GM12878 (cell line): ENCODE measurements at regions of chr9 and their contacts with region 1.

Region 1: DNA sequence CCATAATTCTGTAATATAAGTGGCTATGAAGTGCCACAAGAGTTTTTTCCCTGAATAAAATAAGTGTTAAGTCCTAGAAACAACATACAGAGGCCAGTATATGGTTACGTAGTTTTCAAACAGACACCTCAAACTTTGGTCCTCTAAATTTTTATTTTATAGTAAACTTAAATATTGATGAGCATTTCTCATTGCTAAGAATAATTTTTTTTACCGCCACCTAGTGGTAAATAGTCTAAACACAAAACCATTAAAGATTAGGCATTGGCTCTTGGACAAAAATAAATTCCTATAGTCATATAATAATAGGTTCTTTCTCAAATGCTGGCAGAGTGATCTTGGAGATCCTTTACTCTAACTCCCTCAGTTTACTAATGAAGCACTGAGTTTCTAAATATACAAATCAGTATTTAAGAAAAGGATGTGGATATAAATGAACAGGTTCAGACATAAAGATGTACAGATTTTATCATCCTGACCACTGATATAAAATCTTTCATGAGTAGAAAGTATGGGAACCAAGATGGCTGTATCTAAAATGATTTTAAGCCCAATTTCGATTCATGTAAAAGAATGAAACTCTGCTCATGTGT is 136.2 kb downstream of the FANCC start:
- DNase-seq: no peak
- ATAC-seq: 0 out of 3 replicates have a peak, but pooled peaks have one; percentile 21
- H3K4me3 ChIP-seq: no peak overlapping the region
- H3K27ac ChIP-seq: no peak overlapping the region
- H3K4me1 ChIP-seq: no peaks in the 10 kb centered on the region
- H3K27me3 ChIP-seq: no peaks in the 10 kb centered on the region
- CTCF ChIP-seq: peak; percentile 21 to 47 (median 34); a peak in 4 of 6 replicates
- EP300 ChIP-seq: no peak
- POLR2A ChIP-seq: no peak
- RAD21 ChIP-seq: peak; percentile 22; the same call in 1 of the 2 replicates

Region 2: DNA sequence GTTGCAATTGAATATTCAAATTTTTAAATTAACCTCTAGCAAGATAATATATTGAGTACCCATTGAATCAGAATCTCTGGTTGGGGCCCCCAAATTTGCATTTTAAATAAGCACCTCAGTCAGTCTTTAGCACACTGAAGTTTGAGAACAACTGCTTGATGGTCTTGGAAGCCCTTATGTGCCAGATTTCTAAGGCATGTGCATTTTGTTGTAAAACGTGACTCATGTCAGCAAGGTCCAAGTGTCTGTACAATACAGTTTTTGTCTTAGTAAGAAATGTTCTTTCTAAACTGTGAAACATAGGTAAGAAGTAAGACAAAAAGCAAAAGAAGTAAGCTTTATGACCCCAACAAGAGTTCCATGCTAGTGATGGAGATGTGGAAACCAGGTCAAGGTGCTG is 1664.0 kb before region 1 on chr9:
- CTCF ChIA-PET with region 1: no interaction called
- POLR2A ChIA-PET with region 1: no interaction called
- RAD21 ChIA-PET with region 1: no interaction called
- SMC1A ChIA-PET with region 1: no interaction called
- in situ Hi-C with region 1: no loop called
- intact Hi-C with region 1: no loop called
- DNase-seq: no peak
- ATAC-seq: no peak
- H3K4me3 ChIP-seq: no peak overlapping the region
- H3K27ac ChIP-seq: no peak overlapping the region
- H3K4me1 ChIP-seq: no peaks in the 10 kb centered on the region
- H3K27me3 ChIP-seq: no peaks in the 10 kb centered on the region
- CTCF ChIP-seq: no peak
- EP300 ChIP-seq: no peak
- POLR2A ChIP-seq: no peak
- RAD21 ChIP-seq: no peak

Region 3: GRCh38 chr9:94554439-94555391 is 626.6 kb before region 1 on chr9 and contains the start of gene PCAT7:
- CTCF ChIA-PET with region 1: no interaction called
- POLR2A ChIA-PET with region 1: no interaction called
- RAD21 ChIA-PET with region 1: no interaction called
- SMC1A ChIA-PET with region 1: no interaction called
- in situ Hi-C with region 1: no loop called
- intact Hi-C with region 1: no loop called
- DNase-seq: peak; percentile 12
- ATAC-seq: peak; percentile 100
- H3K4me3 ChIP-seq: no peak within 1 kb of the TSS
- H3K27ac ChIP-seq: no peak within 1 kb of the TSS
- H3K4me1 ChIP-seq: no peaks in the 10 kb centered on the region
- H3K27me3 ChIP-seq: no peaks in the 10 kb centered on the region; a peak in 1 of 4 replicates
- CTCF ChIP-seq: peak; percentile 28 to 54 (median 52); a peak in 4 of 6 replicates
- EP300 ChIP-seq: no peak
- POLR2A ChIP-seq: no peak
- RAD21 ChIP-seq: peak; percentile 44; the same call in 1 of the 2 replicates
- polyA plus RNA-seq, gene PCAT7: 0.04 TPM in 1 of 2 experiments, not detected in the other

Region 4: DNA sequence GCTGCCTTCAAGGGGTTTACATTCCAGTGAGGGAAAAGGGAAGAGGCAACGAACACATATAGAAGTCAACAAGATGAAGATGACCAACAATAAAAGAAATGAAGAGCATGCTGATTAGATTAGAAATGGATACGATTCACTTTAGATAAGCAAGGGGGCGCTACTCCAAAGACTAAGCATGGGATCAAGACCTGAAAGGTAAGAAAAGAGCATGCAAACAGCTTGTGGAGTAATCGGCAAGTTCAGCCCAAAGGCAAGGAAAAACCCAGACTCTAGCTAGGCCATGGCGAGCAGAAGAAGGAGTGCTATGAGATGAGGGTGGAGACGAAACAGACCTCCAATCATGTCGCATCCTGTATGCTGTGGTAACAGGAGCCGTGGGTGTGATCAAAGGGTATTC is 11.7 kb after region 1 on chr9:
- CTCF ChIA-PET with region 1: interaction called, 11 read pairs
- POLR2A ChIA-PET with region 1: no interaction called
- RAD21 ChIA-PET with region 1: no interaction called
- SMC1A ChIA-PET with region 1: no interaction called
- in situ Hi-C with region 1: no loop called
- intact Hi-C with region 1: no loop called
- DNase-seq: no peak
- ATAC-seq: no peak
- H3K4me3 ChIP-seq: no peak overlapping the region
- H3K27ac ChIP-seq: no peak overlapping the region
- H3K4me1 ChIP-seq: peaks cover 5% of the 10 kb centered on the region; the same call in 1 of the 2 replicates
- H3K27me3 ChIP-seq: no peaks in the 10 kb centered on the region
- CTCF ChIP-seq: 0 out of 6 replicates have a peak, but pooled peaks of 1 of the 3 experiments have one; percentile 9
- EP300 ChIP-seq: no peak
- POLR2A ChIP-seq: no peak
- RAD21 ChIP-seq: no peak